GM13977 (cell line): ENCODE measurements at regions of chr18 and their contacts with region 1.

Region 1: GRCh38 chr18:76982841-76983587 is 149.6 kb downstream of the MBP start:
- DNase-seq: peak; percentile 93
- CTCF ChIP-seq: peak; percentile 89

Region 2: GRCh38 chr18:76932026-76932819 is 50.8 kb before region 1 on chr18:
- in situ Hi-C with region 1: loop called (anchors 10 kb)
- DNase-seq: no peak
- CTCF ChIP-seq: no peak